Mammary epithelial cell (primary cell): ENCODE measurements at regions of chr2 and their contacts with region 1.

Region 1: GRCh38 chr2:226984750-226985582 is 149.1 kb downstream of the RHBDD1 start:
- DNase-seq: peak; percentile 34
- H3K4me3 ChIP-seq: no peak overlapping the region
- H3K27ac ChIP-seq: no peak overlapping the region
- H3K4me1 ChIP-seq: no peaks in the 10 kb centered on the region
- H3K27me3 ChIP-seq: no peaks in the 10 kb centered on the region
- CTCF ChIP-seq: peak; percentile 52 to 65

Region 2: GRCh38 chr2:225668606-225669266 is 1316.2 kb before region 1 on chr2:
- CTCF ChIA-PET with region 1: interaction called, 7 read pairs
- dilution Hi-C with region 1: no loop called
- in situ Hi-C with region 1: loop called (anchors 10 to 25 kb)
- intact Hi-C with region 1: loop called (anchors 1 kb)
- DNase-seq: peak; percentile 71
- H3K4me3 ChIP-seq: no peak overlapping the region
- H3K27ac ChIP-seq: peak overlapping the region; percentile 62
- H3K4me1 ChIP-seq: peaks cover 4% of the 10 kb centered on the region
- H3K27me3 ChIP-seq: no peaks in the 10 kb centered on the region
- CTCF ChIP-seq: peak; percentile 87 to 94

Region 3: GRCh38 chr2:226813148-226813701 is 171.7 kb before region 1 on chr2:
- CTCF ChIA-PET with region 1: no interaction called
- dilution Hi-C with region 1: no loop called
- in situ Hi-C with region 1: loop called (anchors 5 to 10 kb)
- intact Hi-C with region 1: loop called (anchors 1 kb)
- DNase-seq: no peak
- H3K4me3 ChIP-seq: no peak overlapping the region
- H3K27ac ChIP-seq: no peak overlapping the region
- H3K4me1 ChIP-seq: no peaks in the 10 kb centered on the region
- H3K27me3 ChIP-seq: no peaks in the 10 kb centered on the region
- CTCF ChIP-seq: peak; percentile 54 to 74

Region 4: GRCh38 chr2:226835796-226836547 is 149.0 kb before region 1 on chr2 and contains the start of gene RHBDD1:
- CTCF ChIA-PET with region 1: no interaction called
- dilution Hi-C with region 1: no loop called
- in situ Hi-C with region 1: no loop called
- intact Hi-C with region 1: loop called (anchors 2 kb)
- DNase-seq: peak; percentile 95
- H3K4me3 ChIP-seq: peak within 1 kb of the TSS; percentile 68 to 79 (median 68)
- H3K27ac ChIP-seq: peak within 1 kb of the TSS; percentile 94
- H3K4me1 ChIP-seq: peaks cover 17% of the 10 kb centered on the region
- H3K27me3 ChIP-seq: no peaks in the 10 kb centered on the region
- CTCF ChIP-seq: no peak
- total RNA-seq, gene RHBDD1: 43.3 to 52.1 TPM

Region 5: DNA sequence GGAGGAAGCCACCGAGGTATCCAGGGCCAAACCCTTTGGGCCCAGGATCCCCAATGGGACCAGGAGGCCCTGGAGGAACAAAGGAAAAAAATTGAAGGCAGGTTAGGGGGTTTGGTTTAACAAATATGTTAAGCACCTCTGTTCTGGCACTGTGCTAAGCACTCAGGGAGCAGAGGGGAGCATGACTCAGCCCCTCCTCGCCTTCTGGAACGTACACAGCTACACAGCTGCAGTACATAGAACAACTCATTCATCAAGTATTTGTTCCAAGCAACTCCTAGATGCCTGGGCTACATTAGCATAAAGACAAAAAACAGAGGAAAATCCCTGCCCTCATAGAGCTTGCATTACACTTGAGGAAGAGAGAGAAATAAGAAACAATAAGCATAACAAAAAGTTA is 25.5 kb after region 1 on chr2:
- CTCF ChIA-PET with region 1: no interaction called
- dilution Hi-C with region 1: no loop called
- in situ Hi-C with region 1: no loop called
- intact Hi-C with region 1: no loop called
- DNase-seq: peak; percentile 41
- H3K4me3 ChIP-seq: no peak overlapping the region
- H3K27ac ChIP-seq: no peak overlapping the region
- H3K4me1 ChIP-seq: no peaks in the 10 kb centered on the region
- H3K27me3 ChIP-seq: no peaks in the 10 kb centered on the region
- CTCF ChIP-seq: no peak